Activated naive CD4-positive, alpha-beta T cell treated with anti-CD3 and anti-CD28 coated beads for 36 hours (primary cell): ENCODE measurements at regions of chr5 and their contacts with region 1.

Region 1: GRCh38 chr5:88979244-88979643 is 96.3 kb upstream of the MEF2C start:
- DNase-seq: peak; percentile 12
- H3K4me3 Mint-ChIP-seq: no peak overlapping the region
- H3K27ac Mint-ChIP-seq: no peak overlapping the region
- H3K4me1 Mint-ChIP-seq: peaks cover 4% of the 10 kb centered on the region
- H3K27me3 Mint-ChIP-seq: peaks cover 2% of the 10 kb centered on the region

Region 2: GRCh38 chr5:88140856-88141752 is 838.1 kb before region 1 on chr5:
- CTCF ChIA-PET with region 1: no interaction called
- intact Hi-C with region 1: no loop called
- DNase-seq: peak; percentile 93
- H3K4me3 Mint-ChIP-seq: no peak overlapping the region
- H3K27ac Mint-ChIP-seq: no peak overlapping the region
- H3K4me1 Mint-ChIP-seq: peaks cover 9% of the 10 kb centered on the region
- H3K27me3 Mint-ChIP-seq: peaks cover 43% of the 10 kb centered on the region

Region 3: DNA sequence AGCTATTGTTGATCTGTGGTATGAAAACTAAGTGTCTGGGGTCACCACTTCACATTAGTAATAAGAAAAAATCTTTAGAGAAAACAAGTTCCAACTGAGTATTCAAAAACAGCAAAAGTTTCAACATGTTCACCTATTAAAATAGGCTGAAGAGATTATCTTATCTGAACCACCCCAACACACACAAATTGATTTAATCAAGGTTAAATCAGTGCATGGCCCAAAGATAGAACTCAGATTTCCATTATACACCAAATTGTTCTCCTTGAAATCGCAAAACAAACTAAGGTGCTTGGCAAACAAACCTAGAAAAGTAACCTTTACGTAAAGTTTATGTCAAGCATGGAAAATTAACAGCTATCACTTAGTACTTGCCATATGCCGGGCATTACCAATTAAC is 771.7 kb before region 1 on chr5:
- CTCF ChIA-PET with region 1: no interaction called
- intact Hi-C with region 1: no loop called
- DNase-seq: no peak
- H3K4me3 Mint-ChIP-seq: no peak overlapping the region
- H3K27ac Mint-ChIP-seq: no peak overlapping the region
- H3K4me1 Mint-ChIP-seq: peaks cover 10% of the 10 kb centered on the region
- H3K27me3 Mint-ChIP-seq: no peaks in the 10 kb centered on the region

Region 4: DNA sequence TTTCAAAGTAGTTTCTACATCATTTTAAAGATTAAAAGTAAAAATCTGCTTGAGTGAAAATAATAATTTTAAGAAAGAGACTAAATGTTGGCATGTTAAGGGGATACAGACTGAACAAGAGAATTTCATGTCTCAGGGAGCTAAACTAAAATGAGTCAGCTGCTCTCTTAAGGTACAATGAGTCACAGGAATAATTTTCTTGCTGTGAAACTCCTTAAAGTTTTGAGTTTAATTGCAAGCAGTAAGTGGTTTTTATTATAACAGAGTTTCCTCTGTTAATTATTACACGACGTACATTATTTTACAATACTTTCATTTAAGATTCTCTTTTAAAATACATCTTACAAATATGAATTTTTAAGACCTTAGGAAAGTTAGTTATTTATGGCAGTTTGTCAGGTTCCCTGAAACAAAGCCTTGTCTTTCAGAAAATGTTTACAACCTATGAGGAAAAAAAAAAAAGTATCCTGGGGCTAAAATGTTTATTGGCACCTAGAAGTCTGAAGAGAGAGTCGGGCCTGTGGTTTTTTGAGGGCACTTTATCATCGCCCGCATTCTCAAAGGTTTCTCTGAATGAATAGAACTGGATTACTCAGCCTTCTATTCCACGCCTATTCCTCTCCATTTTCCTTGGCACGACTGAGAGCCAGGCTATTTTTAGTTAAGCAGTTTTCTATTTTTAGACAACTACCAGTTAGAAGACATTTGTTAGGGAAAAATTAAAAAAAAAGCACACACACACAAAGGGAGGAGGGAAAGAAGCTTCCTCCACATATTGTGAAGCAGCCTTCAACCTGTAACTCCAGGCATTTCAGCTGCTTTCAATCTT is 193.6 kb before region 1 on chr5:
- CTCF ChIA-PET with region 1: no interaction called
- intact Hi-C with region 1: loop called (anchors 2 kb)
- DNase-seq: peak; percentile 13
- H3K4me3 Mint-ChIP-seq: no peak overlapping the region
- H3K27ac Mint-ChIP-seq: no peak overlapping the region
- H3K4me1 Mint-ChIP-seq: peaks cover 15% of the 10 kb centered on the region
- H3K27me3 Mint-ChIP-seq: peaks cover 14% of the 10 kb centered on the region

Region 5: DNA sequence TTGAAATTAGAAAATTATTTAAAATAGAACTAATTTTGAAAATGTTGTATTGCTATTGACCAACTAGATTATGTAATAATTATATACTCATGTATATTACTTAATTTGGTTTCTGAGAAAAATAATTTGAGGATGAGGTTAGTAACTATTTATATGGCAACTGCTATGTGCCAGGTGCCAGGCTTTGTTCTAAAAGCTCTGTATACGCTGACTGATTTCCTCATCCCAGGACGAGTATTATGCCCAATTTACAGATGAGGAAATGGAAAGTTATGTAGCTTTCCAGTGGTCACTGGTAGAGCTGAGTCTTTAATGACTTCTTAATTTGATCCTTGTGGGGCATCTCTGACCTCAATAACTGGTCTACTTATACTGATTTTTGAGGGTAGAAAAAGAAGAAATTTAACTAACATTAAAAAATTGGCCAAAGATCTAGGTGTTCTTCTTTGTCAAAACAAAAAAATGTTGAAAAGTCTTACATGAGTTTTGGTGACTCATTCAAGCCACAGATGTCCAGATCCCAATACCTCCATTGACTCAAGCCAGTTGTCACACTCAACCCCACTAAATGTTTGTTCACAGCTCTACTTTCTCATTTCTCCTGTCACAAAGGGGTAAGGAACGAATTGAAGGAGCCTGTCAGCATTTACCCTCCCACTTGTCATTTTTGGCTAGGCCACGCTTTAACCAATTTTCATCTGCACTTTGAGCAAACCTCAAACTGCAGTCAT is 131.8 kb after region 1 on chr5:
- CTCF ChIA-PET with region 1: no interaction called
- intact Hi-C with region 1: no loop called
- DNase-seq: no peak
- H3K4me3 Mint-ChIP-seq: no peak overlapping the region
- H3K27ac Mint-ChIP-seq: no peak overlapping the region
- H3K4me1 Mint-ChIP-seq: no peaks in the 10 kb centered on the region
- H3K27me3 Mint-ChIP-seq: no peaks in the 10 kb centered on the region